Activated T-helper 2 cell treated with anti-CD3 and anti-CD28 coated beads, Interferon-gamma antibody, Interleukin-2, Interleukin-4, amounts not matched to agents 10 μg/mL and 5 μg/mL and 100 μg/mL, durations not matched to agents 14 hours and 24 hours and 36 hours (primary cell): ENCODE measurements at regions of chr19 and their contacts with region 1.

Region 1: DNA sequence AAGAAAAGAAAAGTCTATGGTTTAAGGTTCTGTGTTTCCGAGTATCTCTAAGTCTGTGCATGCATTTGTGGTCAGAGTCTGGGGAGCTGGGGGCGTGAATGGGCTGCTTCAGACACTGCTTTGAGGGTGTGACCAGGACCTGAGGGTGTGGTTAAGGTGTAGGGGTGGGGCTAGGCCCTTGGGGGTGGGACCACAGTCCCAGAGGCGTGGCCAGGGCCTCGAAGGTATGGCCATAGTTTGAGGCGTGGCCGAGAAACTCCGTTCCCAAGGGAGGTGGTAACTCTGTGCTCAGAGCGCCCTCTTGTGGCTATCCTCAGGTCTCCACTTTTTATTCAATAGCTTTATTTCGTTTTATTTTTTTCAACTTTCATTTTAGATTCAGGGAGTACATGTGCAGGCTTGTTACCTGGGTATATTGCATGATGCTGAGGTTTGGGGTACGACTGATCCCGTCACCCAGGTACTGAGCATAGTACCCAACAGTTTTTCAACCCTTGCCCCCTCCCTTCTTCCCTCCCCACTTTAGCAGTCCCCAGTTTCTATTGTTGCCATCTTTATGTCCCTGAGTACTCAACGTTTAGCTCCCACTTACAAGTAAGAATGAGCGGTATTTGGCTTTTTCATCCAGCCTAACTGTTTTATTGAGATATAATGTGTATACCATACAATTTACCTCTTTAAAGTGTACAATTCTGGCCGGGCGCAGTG is 7.0 kb upstream of the CBLC start:
- DNase-seq: peak; percentile 95
- H3K4me3 Mint-ChIP-seq: peak overlapping the region; percentile 0
- H3K27ac Mint-ChIP-seq: peak overlapping the region; percentile 5
- H3K4me1 Mint-ChIP-seq: peaks cover 27% of the 10 kb centered on the region
- H3K27me3 Mint-ChIP-seq: no peaks in the 10 kb centered on the region

Region 2: DNA sequence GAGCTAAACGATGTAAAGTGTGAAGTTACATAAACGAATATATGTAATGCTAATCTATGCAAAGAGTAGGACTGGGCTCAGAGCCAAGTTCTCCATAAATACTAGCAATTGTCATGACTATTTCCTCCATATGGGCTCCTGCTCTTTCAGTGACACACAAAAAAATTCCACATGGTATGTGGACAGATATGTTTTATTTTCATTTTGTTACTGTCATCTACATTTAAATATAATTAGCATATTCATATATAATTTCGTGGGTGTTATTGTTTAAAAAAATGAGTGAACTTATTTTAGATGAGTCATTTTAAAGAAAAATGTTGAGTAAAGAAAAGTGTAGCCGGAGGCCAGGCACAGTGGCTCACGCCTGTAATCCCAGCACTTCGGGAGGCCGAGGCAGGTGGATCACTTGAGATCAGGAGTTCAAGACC is 162.3 kb before region 1 on chr19:
- intact Hi-C with region 1: no loop called
- DNase-seq: no peak
- H3K4me3 Mint-ChIP-seq: no peak overlapping the region
- H3K27ac Mint-ChIP-seq: no peak overlapping the region
- H3K4me1 Mint-ChIP-seq: peaks cover 2% of the 10 kb centered on the region
- H3K27me3 Mint-ChIP-seq: no peaks in the 10 kb centered on the region

Region 3: DNA sequence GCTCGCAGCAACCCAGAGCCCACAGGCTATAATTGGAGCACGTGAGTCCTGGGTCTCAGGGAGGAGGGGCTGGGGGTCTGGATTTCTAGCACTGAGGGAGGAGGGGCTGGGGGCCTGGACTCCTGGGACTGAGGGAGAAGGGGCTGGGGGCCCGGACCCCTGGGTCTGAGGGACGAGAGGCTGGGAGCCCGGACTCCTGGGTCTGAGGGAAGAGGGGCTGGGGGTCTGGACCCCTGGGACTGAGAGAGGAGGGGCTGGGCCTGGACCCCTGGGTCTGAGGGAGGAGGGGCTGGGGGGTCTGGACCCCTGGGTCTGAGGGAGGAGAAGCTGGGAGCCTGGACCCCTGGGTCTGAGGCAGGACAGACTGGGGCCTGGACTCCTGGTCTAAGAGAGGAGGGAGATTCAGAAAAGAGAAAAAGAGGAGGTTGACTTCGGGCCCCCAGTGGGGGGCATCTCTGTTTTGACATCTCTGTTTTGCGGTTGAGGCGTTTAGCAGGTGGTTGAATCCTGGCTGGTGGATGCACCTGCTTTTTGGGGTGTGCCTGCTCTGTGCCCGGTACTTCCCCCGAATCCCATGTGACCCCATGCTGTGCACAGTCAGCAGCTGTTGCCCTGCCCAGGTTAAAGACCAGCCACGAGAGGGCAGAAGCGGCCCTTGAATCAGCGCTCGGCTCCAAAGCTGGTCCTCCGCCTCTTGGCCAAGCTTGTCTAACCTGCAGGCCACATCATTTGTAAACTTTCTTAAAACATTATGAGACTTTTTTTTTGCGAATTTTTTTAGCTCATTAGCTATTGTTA is 116.5 kb before region 1 on chr19:
- intact Hi-C with region 1: loop called (anchors 1 kb)
- DNase-seq: peak; percentile 60
- H3K4me3 Mint-ChIP-seq: no peak overlapping the region
- H3K27ac Mint-ChIP-seq: no peak overlapping the region
- H3K4me1 Mint-ChIP-seq: peaks cover 8% of the 10 kb centered on the region
- H3K27me3 Mint-ChIP-seq: no peaks in the 10 kb centered on the region

Region 4: DNA sequence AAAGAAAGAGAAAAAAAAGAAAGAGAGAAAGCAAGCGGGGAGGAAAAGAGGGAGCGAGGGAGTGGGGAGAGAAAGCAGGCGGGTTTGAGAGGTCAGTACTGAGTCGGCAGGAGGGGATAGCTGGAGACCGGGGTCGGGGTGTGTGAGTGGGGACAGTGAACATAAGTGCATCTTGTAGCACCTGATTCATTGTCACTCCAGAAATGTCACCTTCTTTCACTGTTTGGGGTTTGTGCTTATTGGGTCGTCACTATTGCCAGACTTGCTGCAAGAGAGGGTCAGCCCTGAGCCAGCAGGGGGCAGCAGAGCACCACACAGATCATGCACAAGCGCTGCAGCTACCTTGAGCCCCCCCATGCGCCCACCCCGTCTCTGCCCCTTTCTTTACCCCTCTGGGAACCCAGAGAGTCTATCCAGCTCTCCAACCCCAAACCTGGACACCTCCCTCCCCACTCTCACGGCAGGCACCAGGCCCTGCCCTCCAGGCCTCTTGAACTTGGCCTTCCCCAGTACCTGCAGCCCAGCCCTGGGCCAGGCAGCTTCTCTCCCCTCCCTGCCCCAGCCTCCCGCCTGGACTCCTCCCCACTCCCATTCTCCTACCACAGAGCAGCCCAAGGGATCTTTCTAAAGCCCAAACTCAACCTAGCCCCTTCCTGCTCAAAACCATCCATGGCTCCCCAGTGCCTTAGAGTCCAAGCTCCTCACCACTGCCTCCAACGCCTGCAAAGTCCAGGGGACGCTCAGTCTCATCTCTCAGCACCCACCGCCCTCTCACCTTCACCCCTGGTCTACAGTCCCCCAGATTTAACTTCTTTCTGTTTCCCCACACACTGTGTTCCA is 81.4 kb before region 1 on chr19:
- intact Hi-C with region 1: loop called (anchors 1 kb)
- DNase-seq: peak; percentile 57
- H3K4me3 Mint-ChIP-seq: no peak overlapping the region
- H3K27ac Mint-ChIP-seq: no peak overlapping the region
- H3K4me1 Mint-ChIP-seq: peaks cover 38% of the 10 kb centered on the region
- H3K27me3 Mint-ChIP-seq: peaks cover 6% of the 10 kb centered on the region

Region 5: DNA sequence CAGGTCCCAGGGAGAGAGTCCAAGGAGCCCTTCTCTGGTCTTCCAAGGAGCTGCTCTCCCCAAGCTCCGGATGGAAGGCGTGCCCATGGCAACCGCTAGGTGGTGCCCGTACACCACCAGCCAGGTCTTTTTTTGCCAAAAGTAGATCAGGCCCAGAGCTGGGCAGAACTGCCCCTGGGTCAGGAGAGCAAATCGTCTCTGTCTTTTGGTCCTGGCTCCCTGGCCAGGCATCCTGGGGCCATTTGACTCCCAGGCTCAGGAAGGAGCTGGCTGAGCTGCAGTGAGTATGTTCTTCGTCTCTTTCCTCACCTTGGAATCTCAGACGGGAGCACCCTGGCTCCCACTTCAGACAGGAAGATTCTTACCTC is 46.8 kb before region 1 on chr19:
- intact Hi-C with region 1: loop called (anchors 1 kb)
- DNase-seq: peak; percentile 72
- H3K4me3 Mint-ChIP-seq: no peak overlapping the region
- H3K27ac Mint-ChIP-seq: no peak overlapping the region
- H3K4me1 Mint-ChIP-seq: peaks cover 35% of the 10 kb centered on the region
- H3K27me3 Mint-ChIP-seq: no peaks in the 10 kb centered on the region

Region 6: GRCh38 chr19:44734986-44735385 is 35.7 kb before region 1 on chr19:
- intact Hi-C with region 1: no loop called
- DNase-seq: no peak
- H3K4me3 Mint-ChIP-seq: no peak overlapping the region
- H3K27ac Mint-ChIP-seq: no peak overlapping the region
- H3K4me1 Mint-ChIP-seq: peaks cover 13% of the 10 kb centered on the region
- H3K27me3 Mint-ChIP-seq: peaks cover 1% of the 10 kb centered on the region

Region 7: DNA sequence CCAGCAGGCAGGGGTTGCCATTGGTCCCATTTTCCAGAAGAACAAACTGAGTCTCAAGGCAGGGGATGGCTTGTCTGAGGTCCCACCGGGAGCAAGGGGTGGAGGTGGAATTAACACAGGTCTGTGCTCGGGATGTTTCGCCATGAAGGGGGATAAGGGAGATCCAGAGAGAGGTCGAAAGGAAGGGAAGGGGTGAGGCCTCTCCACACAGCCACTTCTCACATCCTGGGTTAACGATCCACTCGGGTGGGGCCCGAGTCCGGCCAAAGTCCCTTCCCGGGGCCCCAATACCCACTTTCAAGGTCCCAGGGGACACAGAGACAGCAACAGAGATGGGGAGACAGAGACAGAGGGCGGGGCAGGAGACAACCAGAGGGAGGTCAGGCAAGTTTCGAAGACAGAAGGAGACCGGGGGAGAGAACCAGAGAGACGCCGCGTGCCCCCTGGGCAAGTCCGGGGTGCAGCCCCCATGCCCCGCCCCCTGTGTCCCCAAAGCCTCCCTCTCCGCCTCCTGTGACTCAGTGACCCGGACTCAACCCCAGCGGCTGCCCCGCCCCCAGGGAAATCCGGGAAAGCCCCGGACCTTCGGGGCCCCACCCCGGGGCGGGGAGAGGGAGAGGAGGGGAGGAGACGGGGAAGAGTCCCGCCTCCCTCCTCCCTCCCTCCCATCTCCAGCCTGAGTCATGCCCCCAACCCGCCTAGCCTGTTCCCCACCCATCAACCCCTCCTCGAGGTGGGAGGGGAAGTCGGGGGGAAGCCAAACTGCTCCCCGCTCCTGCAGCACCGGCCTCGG is 23.6 kb before region 1 on chr19:
- intact Hi-C with region 1: loop called (anchors 1 kb)
- DNase-seq: peak; percentile 83
- H3K4me3 Mint-ChIP-seq: peak overlapping the region; percentile 92
- H3K27ac Mint-ChIP-seq: peak overlapping the region; percentile 97
- H3K4me1 Mint-ChIP-seq: peaks cover 46% of the 10 kb centered on the region
- H3K27me3 Mint-ChIP-seq: peaks cover 3% of the 10 kb centered on the region

Region 8: GRCh38 chr19:44752816-44753618 is 17.7 kb before region 1 on chr19:
- intact Hi-C with region 1: loop called (anchors 1 kb)
- DNase-seq: peak; percentile 96
- H3K4me3 Mint-ChIP-seq: peak overlapping the region; percentile 93
- H3K27ac Mint-ChIP-seq: peak overlapping the region; percentile 86
- H3K4me1 Mint-ChIP-seq: peaks cover 49% of the 10 kb centered on the region
- H3K27me3 Mint-ChIP-seq: no peaks in the 10 kb centered on the region

Region 9: DNA sequence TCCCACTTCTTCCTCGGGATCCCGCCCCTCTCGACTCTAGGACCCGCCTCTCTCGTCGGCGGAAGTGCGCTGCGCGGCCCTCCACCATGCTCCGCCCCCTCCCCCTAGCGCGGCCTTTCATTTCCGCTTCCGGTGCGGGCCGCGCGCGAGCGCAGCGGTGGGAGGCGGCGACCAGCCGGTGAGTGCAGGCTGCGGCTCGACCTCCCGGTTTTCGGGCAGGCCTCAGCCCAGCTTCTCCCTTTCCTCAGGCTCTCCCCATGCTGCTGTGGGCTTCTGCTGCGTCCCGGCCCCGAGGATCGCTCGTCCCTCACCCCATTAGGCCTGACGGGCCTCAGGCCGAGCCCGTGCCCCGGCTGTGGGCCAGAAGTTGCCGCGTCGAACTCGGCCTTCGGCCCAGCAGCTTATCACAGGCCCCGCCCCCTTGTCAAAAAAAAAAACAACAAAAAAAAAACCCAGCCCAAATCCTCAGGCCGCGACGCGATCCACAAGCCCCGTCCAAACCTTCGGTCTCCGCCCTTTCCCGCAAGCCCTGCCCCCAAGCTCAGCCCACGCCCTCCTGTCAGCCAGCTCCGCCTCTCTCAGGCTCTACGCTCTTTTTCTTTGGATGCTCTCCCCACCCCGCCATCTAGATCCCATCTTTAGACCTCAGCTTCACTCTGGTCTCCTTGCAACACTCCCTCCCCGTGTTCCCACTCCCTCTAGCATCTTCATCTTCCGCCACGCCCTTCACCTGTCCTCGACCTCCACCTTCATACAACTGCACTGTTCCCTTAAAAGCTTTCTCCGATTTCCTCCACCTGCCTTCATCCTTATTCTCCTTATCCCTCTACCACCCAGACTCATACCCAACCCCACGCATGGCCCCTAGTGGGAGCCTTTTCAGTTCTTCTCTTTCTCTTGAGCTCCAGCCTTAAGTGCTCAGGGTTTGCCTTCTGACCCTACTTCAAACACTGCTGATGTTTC is 268.5 kb after region 1 on chr19 and contains the start of gene CLASRP:
- intact Hi-C with region 1: no loop called
- DNase-seq: peak; percentile 84
- H3K4me3 Mint-ChIP-seq: peak within 1 kb of the TSS; percentile 99
- H3K27ac Mint-ChIP-seq: peak within 1 kb of the TSS; percentile 98
- H3K4me1 Mint-ChIP-seq: peaks cover 21% of the 10 kb centered on the region
- H3K27me3 Mint-ChIP-seq: no peaks in the 10 kb centered on the region
- total RNA-seq, gene CLASRP: 102 and 105 TPM in 2 replicates